Transverse colon (tissue), 4 donors: ENCODE measurements at regions of chr5 and their contacts with region 1.

Region 1: DNA sequence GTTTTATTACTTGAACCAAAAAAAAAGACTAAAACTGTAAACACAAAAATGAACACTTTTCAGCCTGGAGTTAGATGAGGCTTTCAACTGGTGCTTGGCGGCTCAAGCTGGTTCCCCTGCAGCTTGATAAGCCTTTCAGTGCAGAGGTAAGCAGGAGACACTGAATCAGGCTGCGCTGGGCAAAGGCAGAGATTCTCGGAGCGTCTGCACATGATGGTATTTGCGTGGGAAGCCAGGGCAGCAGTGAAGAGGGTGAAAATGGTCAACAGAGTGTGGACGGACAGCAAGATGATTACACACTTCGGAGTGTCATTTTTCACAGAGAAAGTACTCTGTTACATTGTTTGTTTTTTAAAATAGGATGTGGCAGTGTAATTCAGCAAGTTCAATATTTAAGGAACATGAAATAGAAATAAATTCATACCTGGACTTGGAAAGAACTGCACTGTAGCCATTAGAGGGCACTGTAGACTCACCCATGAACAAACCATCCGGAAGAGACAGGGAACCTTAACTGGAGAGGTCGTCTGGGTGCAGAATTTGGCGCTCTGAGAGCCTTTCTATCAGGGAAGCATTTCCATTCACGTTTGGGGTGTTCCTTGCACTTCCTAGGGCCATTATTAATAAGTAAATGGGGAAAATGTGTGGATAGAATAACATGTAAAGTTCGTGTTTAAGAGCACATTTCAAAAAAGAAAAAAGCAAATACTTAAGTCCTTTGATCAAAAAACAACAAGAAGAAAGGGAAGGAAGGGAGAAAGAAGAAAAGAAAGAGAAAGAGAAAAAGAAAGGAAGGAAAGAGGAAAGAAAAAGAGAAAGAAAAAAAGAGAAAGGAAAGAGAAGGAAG is 69.8 kb downstream of the ICE1 start:
- DNase-seq: peak; percentile 17
- H3K4me3 ChIP-seq: no peak overlapping the region
- H3K27ac ChIP-seq: no peak overlapping the region
- H3K4me1 ChIP-seq: peaks cover 0 to 17% (median 13%) of the 10 kb centered on the region in 4 donors
- H3K27me3 ChIP-seq: peaks cover 17% of the 10 kb centered on the region
- CTCF ChIP-seq: peak; percentile 47 to 66 (median 62)
- EP300 ChIP-seq: no peak
- POLR2A ChIP-seq: no peak

Region 2: DNA sequence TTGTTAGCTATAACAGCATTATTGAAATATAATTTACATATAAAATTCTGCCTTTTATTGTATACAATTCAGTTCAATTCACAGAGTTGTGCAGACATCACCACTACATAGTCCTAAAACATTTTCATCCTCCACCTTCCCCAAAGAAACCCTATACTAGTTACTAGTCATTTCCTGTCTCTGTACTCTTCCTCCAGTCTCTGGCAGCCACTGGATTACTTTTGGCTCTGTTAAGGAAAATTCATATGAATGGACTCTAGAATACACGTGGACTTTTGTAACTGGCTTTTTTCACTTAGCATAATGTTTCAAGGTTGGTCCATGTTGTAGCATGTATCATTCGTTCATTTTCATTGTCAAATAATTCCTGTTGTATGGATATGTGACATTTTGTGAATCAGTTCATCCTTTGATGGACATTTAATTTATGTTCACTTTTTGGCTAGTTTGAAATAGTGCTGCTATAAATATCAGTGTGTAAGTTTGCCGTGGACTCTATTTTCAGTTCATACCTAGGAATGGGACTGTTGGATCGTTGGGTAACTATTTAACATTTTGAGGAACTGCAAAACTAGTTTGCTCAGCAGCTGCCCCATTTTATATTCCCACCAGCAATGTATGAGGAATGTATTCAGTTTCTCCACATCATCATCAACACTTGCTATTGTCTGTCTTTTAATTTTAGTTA is 60.1 kb before region 1 on chr5:
- in situ Hi-C with region 1: no loop called
- intact Hi-C with region 1: no loop called
- DNase-seq: no peak
- H3K4me3 ChIP-seq: no peak overlapping the region
- H3K27ac ChIP-seq: no peak overlapping the region
- H3K4me1 ChIP-seq: peaks cover 0 to 35% (median 0%) of the 10 kb centered on the region in 4 donors
- H3K27me3 ChIP-seq: no peaks in the 10 kb centered on the region
- CTCF ChIP-seq: no peak
- EP300 ChIP-seq: no peak
- POLR2A ChIP-seq: no peak

Region 3: DNA sequence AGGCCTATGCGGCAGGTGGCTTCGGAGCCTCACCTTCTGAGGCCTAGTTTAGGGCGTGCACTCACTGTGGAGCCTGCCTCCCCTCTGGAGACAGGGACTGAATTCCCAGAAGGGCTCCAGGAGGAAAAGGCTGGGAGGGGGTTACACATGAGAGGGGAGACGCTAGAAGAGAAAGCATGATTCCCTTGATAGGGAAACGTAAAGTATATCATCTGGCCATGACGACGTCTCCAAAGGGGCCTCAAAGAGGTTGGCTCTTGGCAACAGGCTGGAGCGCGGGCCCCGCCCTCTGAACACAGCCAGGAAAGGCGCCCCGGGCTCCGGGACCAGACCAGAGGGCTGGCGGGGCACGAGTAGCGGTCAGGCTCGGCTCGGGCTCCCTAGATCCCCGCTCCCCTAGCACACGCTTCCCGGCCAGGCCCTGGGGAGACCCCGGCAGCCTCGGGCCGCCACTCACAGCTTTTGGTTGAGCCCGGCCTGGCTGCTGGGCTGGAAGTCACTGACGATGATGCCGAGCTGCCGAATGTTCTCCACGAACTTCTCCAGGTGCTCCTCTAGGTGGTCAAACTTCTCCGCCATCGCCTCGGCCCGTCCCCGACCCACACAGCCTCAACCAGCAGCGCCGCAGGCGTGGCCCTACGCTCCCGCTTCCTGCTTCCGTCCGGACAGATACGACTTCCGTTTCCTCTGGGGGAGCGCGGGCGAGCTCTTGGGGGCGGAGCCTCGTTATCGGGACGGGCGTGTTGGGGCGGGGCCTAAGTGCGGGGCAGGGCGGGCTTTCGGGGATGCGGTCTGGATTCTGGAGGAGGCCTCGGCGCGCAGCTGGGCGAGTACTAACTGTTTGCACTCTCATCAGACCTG is 885.8 kb after region 1 on chr5 and contains the start of gene MED10:
- in situ Hi-C with region 1: no loop called
- intact Hi-C with region 1: loop called (anchors 5 kb)
- DNase-seq: peak; percentile 96
- H3K4me3 ChIP-seq: peak within 1 kb of the TSS; percentile 72 to 99 (median 93)
- H3K27ac ChIP-seq: peak within 1 kb of the TSS; percentile 88 to 94 (median 90)
- H3K4me1 ChIP-seq: peaks cover 9 to 24% (median 18%) of the 10 kb centered on the region in 4 donors
- H3K27me3 ChIP-seq: no peaks in the 10 kb centered on the region
- CTCF ChIP-seq: no peak
- EP300 ChIP-seq: no peak
- POLR2A ChIP-seq: peak; percentile 81
- total RNA-seq, gene MED10: 9.4 to 25.1 (median 19.6) TPM

Region 4: GRCh38 chr5:6576861-6577501 is 1084.7 kb after region 1 on chr5:
- in situ Hi-C with region 1: loop called in 1 of 4 experiments (anchors 25 kb)
- intact Hi-C with region 1: no loop called
- DNase-seq: no peak
- H3K4me3 ChIP-seq: no peak overlapping the region
- H3K27ac ChIP-seq: no peak overlapping the region
- H3K4me1 ChIP-seq: no peaks in the 10 kb centered on the region
- H3K27me3 ChIP-seq: peaks cover 8% of the 10 kb centered on the region
- CTCF ChIP-seq: peak; percentile 23 to 44 (median 31)
- EP300 ChIP-seq: no peak
- POLR2A ChIP-seq: no peak

Region 5: DNA sequence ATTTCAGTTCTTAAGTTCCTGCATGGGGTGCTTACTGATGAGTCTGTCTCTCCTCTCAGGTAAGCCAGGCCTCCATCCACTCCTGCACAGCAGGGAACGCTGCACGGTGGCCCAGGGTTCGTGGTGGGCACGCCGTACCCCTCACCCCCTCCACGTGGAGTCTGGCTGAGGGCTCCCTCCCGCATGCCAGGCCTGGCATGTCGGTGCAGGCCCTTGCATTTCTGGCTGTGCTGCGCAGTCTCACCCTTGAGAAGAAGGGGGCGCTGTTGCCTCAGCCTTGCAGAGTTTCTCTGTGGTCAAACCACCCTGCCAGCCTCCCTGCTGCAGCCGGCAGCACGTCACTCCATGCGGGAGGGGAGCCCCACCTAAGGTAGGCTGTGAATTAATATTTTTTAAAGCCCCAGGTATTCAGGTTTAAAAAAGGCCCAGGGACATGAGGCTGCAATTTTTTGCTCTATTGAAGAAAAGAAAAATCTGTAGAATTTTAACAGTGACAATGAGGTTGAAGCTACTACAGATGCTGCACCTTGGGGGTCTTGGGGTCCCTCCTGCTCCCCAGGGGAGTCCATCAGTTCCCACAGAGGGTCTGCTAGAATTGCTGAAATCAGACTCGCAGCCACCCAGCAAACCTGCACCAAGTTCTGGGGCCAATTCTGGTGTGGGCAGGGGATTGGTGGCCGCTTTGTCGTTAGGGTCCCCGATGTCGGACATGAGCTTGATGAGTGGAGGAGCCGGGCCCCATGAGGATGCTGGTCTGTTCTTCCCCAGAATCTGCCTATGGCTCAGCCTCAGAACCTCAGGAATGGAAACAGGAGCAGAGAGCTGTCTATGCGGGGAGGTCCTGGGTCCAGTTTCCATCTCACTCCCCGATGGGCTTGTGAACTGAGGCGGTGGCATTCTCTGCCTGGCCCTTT is 1273.6 kb after region 1 on chr5:
- in situ Hi-C with region 1: loop called in 1 of 4 experiments (anchors 25 kb)
- intact Hi-C with region 1: no loop called
- DNase-seq: peak; percentile 84
- H3K4me3 ChIP-seq: peak overlapping the region in 1 of 4 donors; percentile 33
- H3K27ac ChIP-seq: peak overlapping the region; percentile 63 to 72 (median 68)
- H3K4me1 ChIP-seq: peaks cover 0 to 19% (median 12%) of the 10 kb centered on the region in 4 donors
- H3K27me3 ChIP-seq: no peaks in the 10 kb centered on the region
- CTCF ChIP-seq: peak; percentile 77 to 86 (median 83)
- EP300 ChIP-seq: no peak
- POLR2A ChIP-seq: no peak